ENCODE measurements at regions of chr5 and their contacts with region 1.

Region 1: DNA sequence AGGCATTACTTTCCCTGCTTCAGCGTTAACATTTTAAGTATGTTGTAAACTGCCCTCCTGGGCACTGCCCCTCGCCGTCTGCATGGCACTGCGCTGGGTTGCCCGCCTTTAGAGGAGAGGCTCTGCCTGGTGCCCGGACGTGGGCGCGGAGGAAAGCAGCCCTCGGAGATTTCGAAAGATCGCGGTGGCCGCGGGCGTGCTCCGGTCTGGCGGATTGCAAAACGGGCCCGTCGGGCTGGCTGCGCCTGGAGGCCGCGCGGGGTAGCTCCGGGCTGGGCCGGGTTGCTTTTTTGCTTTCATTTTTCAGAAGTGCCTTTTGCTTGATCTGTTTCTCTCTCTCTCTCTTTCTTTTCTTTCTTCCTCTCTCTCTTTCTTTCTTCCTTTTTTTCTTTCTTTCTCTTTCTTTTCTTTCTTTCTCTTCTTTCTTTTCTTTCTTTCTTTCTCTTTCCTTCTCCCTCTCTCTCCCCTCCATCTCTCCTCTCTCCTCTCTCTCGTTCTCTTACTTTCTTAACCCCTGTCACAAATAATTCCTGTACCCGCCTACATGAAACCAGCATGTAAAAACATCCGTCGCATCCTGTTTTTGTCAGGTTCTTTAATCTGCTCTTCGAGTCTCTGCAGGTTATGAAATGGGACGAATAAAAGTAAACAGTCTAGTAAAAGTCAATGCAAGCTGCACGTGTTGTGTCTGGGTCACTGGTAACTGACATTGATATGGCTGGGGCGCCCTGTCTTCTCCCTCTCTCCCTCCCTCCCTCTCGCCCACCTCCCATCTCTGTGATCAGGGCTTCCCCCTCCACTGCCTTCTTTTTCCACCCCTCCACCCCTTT is 1.7 kb downstream of the FST start:
- DNase-seq: peak; percentile 71
- H3K4me3 Mint-ChIP-seq: peak overlapping the region; percentile 76
- H3K27ac Mint-ChIP-seq: no peak overlapping the region
- H3K4me1 Mint-ChIP-seq: peaks cover 15% of the 10 kb centered on the region
- H3K27me3 Mint-ChIP-seq: peaks cover 38% of the 10 kb centered on the region

Region 2: DNA sequence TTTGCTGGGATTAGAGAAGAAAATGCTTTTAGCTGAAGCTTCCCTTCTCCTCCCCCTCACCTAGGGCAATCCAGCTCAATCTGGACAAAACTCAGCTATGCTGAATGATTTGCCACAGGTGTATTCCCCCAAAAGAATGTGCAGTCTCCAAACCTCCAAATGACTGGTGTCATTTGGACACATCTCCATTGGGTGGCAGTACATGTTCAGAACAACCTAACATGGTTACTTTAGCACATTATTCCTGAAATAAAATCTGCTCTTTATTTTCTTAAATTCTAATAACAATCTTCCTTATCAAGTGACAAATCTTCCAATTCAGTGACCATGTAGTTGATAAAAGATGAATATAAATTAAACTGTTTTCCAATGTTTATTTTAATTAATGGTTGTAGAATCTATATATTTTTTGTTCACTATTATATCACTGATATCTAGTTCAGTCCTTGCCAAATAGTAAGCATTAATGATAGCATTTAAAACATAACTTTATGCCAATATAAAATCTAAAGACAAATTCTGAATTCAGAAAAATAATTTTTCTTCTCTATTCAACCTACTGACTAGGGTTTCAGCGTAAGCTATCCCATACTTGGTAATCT is 311.3 kb before region 1 on chr5:
- CTCF ChIA-PET with region 1: no interaction called
- intact Hi-C with region 1: loop called (anchors 2 kb)
- DNase-seq: peak; percentile 25
- H3K4me3 Mint-ChIP-seq: no peak overlapping the region
- H3K27ac Mint-ChIP-seq: no peak overlapping the region
- H3K4me1 Mint-ChIP-seq: no peaks in the 10 kb centered on the region
- H3K27me3 Mint-ChIP-seq: peaks cover 3% of the 10 kb centered on the region

Region 3: GRCh38 chr5:53425598-53426511 is 56.2 kb before region 1 on chr5:
- CTCF ChIA-PET with region 1: no interaction called
- intact Hi-C with region 1: loop called (anchors 2 kb)
- DNase-seq: peak; percentile 59
- H3K4me3 Mint-ChIP-seq: no peak overlapping the region
- H3K27ac Mint-ChIP-seq: no peak overlapping the region
- H3K4me1 Mint-ChIP-seq: no peaks in the 10 kb centered on the region
- H3K27me3 Mint-ChIP-seq: peaks cover 20% of the 10 kb centered on the region

Region 4: GRCh38 chr5:53779541-53779981 is 297.5 kb after region 1 on chr5:
- CTCF ChIA-PET with region 1: no interaction called
- intact Hi-C with region 1: loop called (anchors 5 kb)
- DNase-seq: peak; percentile 5
- H3K4me3 Mint-ChIP-seq: no peak overlapping the region
- H3K27ac Mint-ChIP-seq: no peak overlapping the region
- H3K4me1 Mint-ChIP-seq: peaks cover 13% of the 10 kb centered on the region
- H3K27me3 Mint-ChIP-seq: peaks cover 4% of the 10 kb centered on the region

Region 5: GRCh38 chr5:54217826-54218503 is 735.9 kb after region 1 on chr5:
- CTCF ChIA-PET with region 1: interaction called, 4 read pairs
- intact Hi-C with region 1: loop called (anchors 1 kb)
- DNase-seq: peak; percentile 27
- H3K4me3 Mint-ChIP-seq: no peak overlapping the region
- H3K27ac Mint-ChIP-seq: no peak overlapping the region
- H3K4me1 Mint-ChIP-seq: peaks cover 8% of the 10 kb centered on the region
- H3K27me3 Mint-ChIP-seq: no peaks in the 10 kb centered on the region

Region 6: GRCh38 chr5:54415896-54416601 is 933.9 kb after region 1 on chr5:
- CTCF ChIA-PET with region 1: no interaction called
- intact Hi-C with region 1: loop called (anchors 5 kb)
- DNase-seq: peak; percentile 8
- H3K4me3 Mint-ChIP-seq: no peak overlapping the region
- H3K27ac Mint-ChIP-seq: no peak overlapping the region
- H3K4me1 Mint-ChIP-seq: no peaks in the 10 kb centered on the region
- H3K27me3 Mint-ChIP-seq: peaks cover 2% of the 10 kb centered on the region

Region 7: DNA sequence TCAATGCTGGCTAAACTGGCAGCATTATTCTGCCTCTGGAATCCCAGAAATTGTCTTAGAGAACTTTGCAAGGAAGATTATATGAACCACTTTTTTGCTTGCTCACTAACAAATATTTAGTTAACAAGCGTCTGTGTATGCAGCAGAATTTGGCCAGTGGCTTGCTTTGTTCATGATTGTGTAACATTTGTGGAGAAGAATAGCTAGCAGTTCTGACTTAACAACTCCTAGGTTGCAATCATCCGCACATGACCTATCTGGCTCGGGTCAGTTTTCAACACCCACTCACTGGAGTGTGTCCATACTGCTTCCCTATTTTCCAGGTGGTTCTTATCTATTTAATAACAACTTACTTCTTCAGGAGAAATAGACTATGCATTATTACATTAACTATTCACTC is 1133.9 kb after region 1 on chr5:
- CTCF ChIA-PET with region 1: no interaction called
- intact Hi-C with region 1: no loop called
- DNase-seq: no peak
- H3K4me3 Mint-ChIP-seq: no peak overlapping the region
- H3K27ac Mint-ChIP-seq: no peak overlapping the region
- H3K4me1 Mint-ChIP-seq: peaks cover 4% of the 10 kb centered on the region
- H3K27me3 Mint-ChIP-seq: no peaks in the 10 kb centered on the region

Measured in activated naive CD4-positive, alpha-beta T cell treated with anti-CD3 and anti-CD28 coated beads for 36 hours (primary cell).